HEK293 (cell line): ENCODE measurements at regions of chr1 and their contacts with region 1.

Region 1: GRCh38 chr1:10494754-10495474 is 20.2 kb downstream of the PEX14 start:
- H3K4me3 ChIP-seq: no peak overlapping the region
- H3K27ac ChIP-seq: no peak overlapping the region
- H3K4me1 ChIP-seq: no peaks in the 10 kb centered on the region; the same call in 1 of the 2 replicates
- CTCF ChIP-seq: peak; percentile 83

Region 2: GRCh38 chr1:10152709-10153284 is 342.1 kb before region 1 on chr1:
- CTCF ChIA-PET with region 1: no interaction called
- POLR2A ChIA-PET with region 1: interaction called, 10 read pairs
- H3K4me3 ChIP-seq: no peak overlapping the region
- H3K27ac ChIP-seq: no peak overlapping the region
- H3K4me1 ChIP-seq: no peaks in the 10 kb centered on the region
- CTCF ChIP-seq: no peak

Region 3: DNA sequence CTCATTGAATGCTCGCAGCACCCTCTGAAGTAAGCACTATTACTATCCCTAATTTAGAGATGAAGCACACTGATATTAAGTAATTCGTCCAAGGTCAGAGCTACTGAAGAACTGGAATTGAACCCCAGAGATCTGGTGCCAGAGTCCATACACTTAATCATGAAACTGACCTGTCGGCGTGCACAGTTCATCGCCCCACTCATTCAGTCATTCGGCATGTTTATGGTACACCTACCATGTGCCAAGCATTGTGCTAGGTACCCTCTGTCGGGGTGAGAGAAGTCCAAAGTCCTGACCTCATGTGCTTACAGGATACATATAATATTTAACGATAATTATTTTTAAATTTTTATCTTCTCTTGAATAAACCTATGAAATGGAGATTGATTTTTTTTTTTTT is 70.3 kb before region 1 on chr1:
- CTCF ChIA-PET with region 1: interaction called, 148 read pairs
- POLR2A ChIA-PET with region 1: interaction called, 3 read pairs
- H3K4me3 ChIP-seq: no peak overlapping the region
- H3K27ac ChIP-seq: no peak overlapping the region
- H3K4me1 ChIP-seq: no peaks in the 10 kb centered on the region
- CTCF ChIP-seq: no peak

Region 4: GRCh38 chr1:10430216-10431069 is 64.5 kb before region 1 on chr1 and contains the start of gene CENPS:
- CTCF ChIA-PET with region 1: interaction called, 148 read pairs
- POLR2A ChIA-PET with region 1: interaction called, 10 read pairs
- H3K4me3 ChIP-seq: peak within 1 kb of the TSS; percentile 86
- H3K27ac ChIP-seq: peak within 1 kb of the TSS; percentile 85
- H3K4me1 ChIP-seq: no peaks in the 10 kb centered on the region
- CTCF ChIP-seq: peak; percentile 98

Region 5: DNA sequence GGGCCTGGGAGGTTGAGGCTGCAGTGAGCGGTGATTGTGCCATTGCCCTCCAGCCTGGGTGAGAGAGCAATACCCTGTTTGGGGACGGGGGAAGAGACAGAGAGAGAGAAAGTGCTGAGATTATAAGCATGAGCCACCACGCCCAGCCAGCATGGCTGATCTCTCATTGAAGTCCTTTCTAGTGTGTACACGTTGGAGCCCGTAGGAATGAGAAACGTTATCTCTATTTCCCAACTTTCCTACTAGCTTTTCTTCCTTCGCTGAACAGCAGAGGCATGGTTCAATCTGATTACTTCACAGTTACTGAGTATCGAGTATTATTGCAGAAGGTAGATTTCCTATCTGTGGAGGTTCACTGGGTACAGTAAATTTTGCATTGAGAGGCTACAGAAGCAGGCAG is 15.6 kb before region 1 on chr1:
- CTCF ChIA-PET with region 1: interaction called, 17 read pairs
- POLR2A ChIA-PET with region 1: no interaction called
- H3K4me3 ChIP-seq: no peak overlapping the region
- H3K27ac ChIP-seq: no peak overlapping the region
- H3K4me1 ChIP-seq: no peaks in the 10 kb centered on the region
- CTCF ChIP-seq: no peak

Region 6: GRCh38 chr1:10484521-10484920 is 10.4 kb before region 1 on chr1:
- CTCF ChIA-PET with region 1: interaction called, 17 read pairs
- POLR2A ChIA-PET with region 1: no interaction called
- H3K4me3 ChIP-seq: no peak overlapping the region
- H3K27ac ChIP-seq: 0 out of 2 replicates have a peak overlapping the region, but pooled peaks have one; percentile 11
- H3K4me1 ChIP-seq: 0 out of 2 replicates have a peak, but pooled peaks cover 3% of the 10 kb centered on the region
- CTCF ChIP-seq: no peak

Region 7: DNA sequence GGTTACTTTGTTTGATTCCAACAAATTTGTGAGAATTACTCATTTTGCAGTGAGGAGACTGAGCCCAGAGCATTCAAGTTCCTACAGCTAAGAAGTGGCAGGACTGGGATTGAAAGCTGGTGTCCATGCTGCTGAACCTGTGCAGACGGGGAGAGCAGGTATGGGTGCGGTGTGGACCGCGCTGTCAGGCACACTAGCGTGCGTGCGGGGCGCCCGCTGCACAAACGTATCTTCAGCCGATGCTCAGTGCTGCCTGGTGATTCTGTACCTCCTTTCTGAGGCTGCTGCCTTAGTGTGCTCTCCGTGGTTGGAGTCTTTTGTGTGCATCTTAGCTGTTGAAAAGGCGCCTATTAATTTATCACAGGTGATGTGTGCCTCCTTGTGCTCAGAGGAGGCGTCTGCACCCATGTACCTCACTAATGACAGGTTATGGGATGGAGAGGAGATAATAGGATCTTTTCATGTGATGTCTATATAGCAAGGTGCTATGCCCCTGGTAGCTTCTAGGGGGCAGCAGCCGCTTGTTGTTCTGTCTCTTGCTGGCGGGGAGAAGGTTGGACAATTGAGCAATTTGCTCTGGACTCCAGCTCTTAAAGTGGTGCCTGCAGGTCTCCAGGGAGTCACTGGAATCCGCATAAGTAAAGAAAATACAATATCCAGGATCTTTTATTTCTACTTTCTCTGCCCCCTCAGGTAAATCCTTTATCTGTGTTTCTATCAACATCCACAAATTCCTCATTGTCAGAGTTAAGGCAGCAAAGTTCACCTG is 12.4 kb after region 1 on chr1:
- CTCF ChIA-PET with region 1: interaction called, 94 read pairs
- POLR2A ChIA-PET with region 1: no interaction called
- H3K4me3 ChIP-seq: no peak overlapping the region
- H3K27ac ChIP-seq: no peak overlapping the region
- H3K4me1 ChIP-seq: peaks cover 6% of the 10 kb centered on the region
- CTCF ChIP-seq: peak; percentile 81